ENCODE measurements at regions of chr16 and their contacts with region 1.

Region 1: GRCh38 chr16:78002915-78003538 is 19.3 kb upstream of the CLEC3A start:
- DNase-seq: peak; percentile 94
- ATAC-seq: peak; percentile 92
- H3K4me3 Mint-ChIP-seq: no peak overlapping the region
- H3K27ac Mint-ChIP-seq: no peak overlapping the region
- H3K4me1 Mint-ChIP-seq: peaks cover 29% of the 10 kb centered on the region
- H3K27me3 Mint-ChIP-seq: peaks cover 14% of the 10 kb centered on the region
- CTCF ChIP-seq: peak; percentile 89

Region 2: GRCh38 chr16:77660311-77660710 is 342.7 kb before region 1 on chr16:
- CTCF ChIA-PET with region 1: interaction called, 10 read pairs
- POLR2A ChIA-PET with region 1: no interaction called
- DNase-seq: no peak
- ATAC-seq: peak; percentile 51
- H3K4me3 Mint-ChIP-seq: no peak overlapping the region
- H3K27ac Mint-ChIP-seq: no peak overlapping the region
- H3K4me1 Mint-ChIP-seq: peaks cover 14% of the 10 kb centered on the region
- H3K27me3 Mint-ChIP-seq: no peaks in the 10 kb centered on the region; the same call in 1 of the 2 replicates
- CTCF ChIP-seq: no peak

Region 3: GRCh38 chr16:77722309-77723107 is 280.5 kb before region 1 on chr16 and contains the start of gene NUDT7:
- CTCF ChIA-PET with region 1: interaction called, 11 read pairs
- POLR2A ChIA-PET with region 1: no interaction called
- DNase-seq: peak; percentile 99
- ATAC-seq: peak; percentile 94
- H3K4me3 Mint-ChIP-seq: peak within 1 kb of the TSS; percentile 78
- H3K27ac Mint-ChIP-seq: peak within 1 kb of the TSS; percentile 98
- H3K4me1 Mint-ChIP-seq: peaks cover 17% of the 10 kb centered on the region
- H3K27me3 Mint-ChIP-seq: no peaks in the 10 kb centered on the region
- CTCF ChIP-seq: no peak
- total RNA-seq, gene NUDT7: 7.5 to 11.3 TPM (median 10.7 TPM) in 3 replicates

Region 4: GRCh38 chr16:77816293-77816692 is 186.7 kb before region 1 on chr16:
- CTCF ChIA-PET with region 1: no interaction called
- POLR2A ChIA-PET with region 1: no interaction called
- DNase-seq: no peak
- ATAC-seq: no peak
- H3K4me3 Mint-ChIP-seq: no peak overlapping the region
- H3K27ac Mint-ChIP-seq: 0 out of 2 replicates have a peak overlapping the region, but pooled peaks have one; percentile 57
- H3K4me1 Mint-ChIP-seq: peaks cover 4% of the 10 kb centered on the region; the same call in 1 of the 2 replicates
- H3K27me3 Mint-ChIP-seq: no peaks in the 10 kb centered on the region
- CTCF ChIP-seq: no peak

Region 5: DNA sequence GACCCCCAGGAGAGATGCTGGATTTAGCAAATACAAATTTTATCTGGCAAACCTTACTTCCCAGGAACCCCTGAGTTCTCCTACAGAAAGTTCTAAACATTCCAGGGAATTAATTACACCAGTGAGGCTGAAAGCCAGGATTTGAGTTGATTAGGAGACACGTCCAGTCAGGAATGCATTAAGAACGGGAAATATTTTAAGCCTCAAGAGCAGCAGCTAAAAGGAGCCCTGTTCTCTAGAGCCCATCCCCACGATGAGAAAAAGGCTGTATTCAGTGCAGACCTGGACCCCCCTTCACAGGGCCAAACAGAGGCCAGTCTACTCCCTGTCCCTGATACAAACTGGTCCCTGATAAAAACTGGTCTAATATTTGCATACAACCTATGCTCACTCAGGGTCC is 159.6 kb before region 1 on chr16:
- CTCF ChIA-PET with region 1: no interaction called
- POLR2A ChIA-PET with region 1: no interaction called
- DNase-seq: no peak
- ATAC-seq: no peak
- H3K4me3 Mint-ChIP-seq: no peak overlapping the region
- H3K27ac Mint-ChIP-seq: no peak overlapping the region
- H3K4me1 Mint-ChIP-seq: peaks cover 12% of the 10 kb centered on the region
- H3K27me3 Mint-ChIP-seq: no peaks in the 10 kb centered on the region
- CTCF ChIP-seq: no peak

Region 6: GRCh38 chr16:77951775-77952174 is 51.3 kb before region 1 on chr16:
- CTCF ChIA-PET with region 1: interaction called, 30 read pairs
- POLR2A ChIA-PET with region 1: interaction called, 4 read pairs
- DNase-seq: no peak
- ATAC-seq: peak; percentile 74
- H3K4me3 Mint-ChIP-seq: no peak overlapping the region
- H3K27ac Mint-ChIP-seq: no peak overlapping the region
- H3K4me1 Mint-ChIP-seq: peaks cover 48% of the 10 kb centered on the region
- H3K27me3 Mint-ChIP-seq: peaks cover 23% of the 10 kb centered on the region
- CTCF ChIP-seq: peak; percentile 43; the same call in 1 of the 2 replicates

Region 7: DNA sequence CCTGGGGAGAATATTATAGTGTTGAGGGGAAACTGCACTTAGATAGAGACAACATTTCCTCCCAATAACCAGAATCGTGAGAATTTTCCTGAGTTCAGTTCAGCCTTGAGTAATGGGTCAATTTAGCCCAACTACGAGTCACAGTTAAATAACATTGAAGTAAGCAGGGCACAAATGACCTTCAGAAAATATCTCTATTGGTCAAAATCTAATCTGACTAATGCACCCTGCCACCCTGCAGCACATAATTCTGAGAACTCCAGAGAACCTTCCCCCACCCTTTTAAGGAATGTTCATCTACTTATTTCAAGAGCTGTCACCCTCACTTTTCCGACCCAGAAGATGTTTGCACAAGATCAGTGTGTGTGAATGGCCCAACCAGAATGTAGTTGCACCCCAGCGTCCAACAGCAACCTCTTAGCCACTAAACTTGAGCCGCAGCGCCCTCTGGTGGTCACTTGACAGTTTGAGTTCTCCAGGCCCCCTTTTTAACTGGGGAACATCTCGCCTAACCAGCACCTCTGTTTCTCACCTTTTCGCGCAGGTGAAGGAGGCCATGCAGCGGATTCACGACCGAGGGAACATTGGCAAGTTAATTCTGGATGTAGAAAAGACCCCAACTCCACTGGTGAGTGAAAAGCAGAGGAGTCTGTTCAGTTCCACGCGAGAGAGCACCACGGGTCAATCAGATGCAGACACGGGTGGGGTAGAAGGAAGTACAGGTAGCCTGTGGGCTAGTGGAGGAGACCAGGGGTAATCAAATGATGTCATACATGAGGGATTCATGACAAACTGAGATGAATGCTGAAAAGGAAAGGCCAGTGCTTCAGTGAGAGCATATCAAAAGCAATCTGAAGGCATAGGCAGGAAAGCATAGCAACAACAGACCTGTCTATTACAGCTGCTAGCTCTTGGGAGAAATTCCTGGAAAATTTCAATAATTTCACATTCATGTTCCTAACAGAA is 31.4 kb before region 1 on chr16:
- CTCF ChIA-PET with region 1: interaction called, 68 read pairs
- POLR2A ChIA-PET with region 1: interaction called, 3 read pairs
- DNase-seq: peak; percentile 93
- ATAC-seq: peak; percentile 38
- H3K4me3 Mint-ChIP-seq: no peak overlapping the region
- H3K27ac Mint-ChIP-seq: peak overlapping the region; percentile 3; the same call in 1 of the 2 replicates
- H3K4me1 Mint-ChIP-seq: peaks cover 65% of the 10 kb centered on the region
- H3K27me3 Mint-ChIP-seq: peaks cover 10% of the 10 kb centered on the region
- CTCF ChIP-seq: peak; percentile 77

Region 8: DNA sequence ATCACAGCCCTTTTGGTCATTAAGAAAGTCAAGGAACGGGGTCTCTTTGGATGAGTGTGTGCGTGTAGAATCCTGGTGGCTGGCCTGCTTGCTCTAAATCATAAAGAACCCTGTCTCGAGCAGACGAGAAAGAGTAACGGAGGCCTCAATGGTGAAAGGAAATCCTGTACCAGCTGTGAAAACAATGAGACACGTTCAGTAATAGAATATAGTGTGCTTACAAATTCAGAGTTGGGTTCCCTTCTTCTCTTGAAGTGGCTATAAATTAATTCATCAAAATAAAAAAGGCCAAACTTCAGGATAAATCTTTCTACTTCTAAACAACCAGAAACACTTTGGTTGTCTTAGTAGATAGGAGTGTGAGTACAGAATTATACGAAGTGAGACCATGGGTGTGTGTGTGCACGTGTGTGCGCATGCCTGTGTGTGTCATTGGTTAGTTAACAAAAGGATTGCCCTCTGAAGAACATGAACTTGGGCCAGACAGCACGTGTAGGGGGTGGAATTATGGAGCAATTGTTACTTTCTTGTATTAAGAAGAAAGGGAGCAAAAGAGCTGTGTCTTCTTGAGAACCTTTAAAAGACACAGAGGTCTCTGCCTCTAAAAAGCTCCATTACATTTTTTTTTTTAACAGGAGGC is 145.0 kb after region 1 on chr16:
- CTCF ChIA-PET with region 1: no interaction called
- POLR2A ChIA-PET with region 1: no interaction called
- DNase-seq: no peak
- ATAC-seq: no peak
- H3K4me3 Mint-ChIP-seq: no peak overlapping the region
- H3K27ac Mint-ChIP-seq: no peak overlapping the region
- H3K4me1 Mint-ChIP-seq: no peaks in the 10 kb centered on the region
- H3K27me3 Mint-ChIP-seq: no peaks in the 10 kb centered on the region
- CTCF ChIP-seq: no peak

Measured in WTC11 (cell line).